ENCODE measurements at regions of chr10 and their contacts with region 1.

Region 1: DNA sequence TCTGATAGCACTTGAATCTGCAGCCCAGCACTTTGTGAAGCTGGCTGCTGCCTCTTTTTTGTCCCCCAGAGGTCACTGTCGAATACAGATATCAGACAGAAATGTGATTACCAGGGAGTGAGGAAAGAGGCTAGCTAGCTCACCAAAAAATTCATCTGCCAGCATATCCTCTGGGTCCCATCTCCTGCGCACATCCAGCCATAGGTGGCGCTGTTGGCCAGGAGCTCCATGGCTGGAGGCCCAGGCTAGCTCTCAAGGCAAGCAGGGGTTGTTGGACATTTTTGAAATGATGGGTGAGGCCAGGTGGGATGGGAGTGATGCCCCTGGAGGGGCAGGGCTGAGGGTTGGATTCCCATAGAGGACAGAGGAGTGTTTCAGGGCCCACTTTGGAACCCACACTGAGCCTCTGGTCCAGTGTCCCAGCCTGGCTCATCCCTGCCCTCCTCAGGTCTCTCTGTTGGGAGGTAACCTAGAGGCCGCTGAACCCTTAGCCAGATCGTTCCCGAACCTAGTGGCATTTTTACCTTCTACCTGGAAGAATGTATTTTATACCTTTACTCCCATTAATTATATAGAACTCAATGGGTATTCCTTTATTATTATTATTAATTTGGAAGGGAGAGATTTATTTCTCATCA is 14.8 kb downstream of the DPCD start:
- DNase-seq: peak; percentile 50 to 67
- H3K4me3 ChIP-seq: no peak overlapping the region
- H3K27ac ChIP-seq: no peak overlapping the region
- H3K4me1 ChIP-seq: no peaks in the 10 kb centered on the region
- H3K27me3 ChIP-seq: no peaks in the 10 kb centered on the region
- CTCF ChIP-seq: peak; percentile 51 to 74 (median 65)
- POLR2A ChIP-seq: no peak

Region 2: GRCh38 chr10:101779544-101780186 is 176.8 kb after region 1 on chr10:
- intact Hi-C with region 1: loop called (anchors 10 kb)
- DNase-seq: peak; percentile 66 to 74
- H3K4me3 ChIP-seq: peak overlapping the region; percentile 17 to 25
- H3K27ac ChIP-seq: no peak overlapping the region
- H3K4me1 ChIP-seq: peaks cover 0 to 33% of the 10 kb centered on the region in 2 donors
- H3K27me3 ChIP-seq: peaks cover 9 to 18% of the 10 kb centered on the region in 2 donors
- CTCF ChIP-seq: peak; percentile 68 to 82 (median 78)
- POLR2A ChIP-seq: no peak